OCI-LY7 (cell line): ENCODE measurements at regions of chr20 and their contacts with region 1.

Region 1: DNA sequence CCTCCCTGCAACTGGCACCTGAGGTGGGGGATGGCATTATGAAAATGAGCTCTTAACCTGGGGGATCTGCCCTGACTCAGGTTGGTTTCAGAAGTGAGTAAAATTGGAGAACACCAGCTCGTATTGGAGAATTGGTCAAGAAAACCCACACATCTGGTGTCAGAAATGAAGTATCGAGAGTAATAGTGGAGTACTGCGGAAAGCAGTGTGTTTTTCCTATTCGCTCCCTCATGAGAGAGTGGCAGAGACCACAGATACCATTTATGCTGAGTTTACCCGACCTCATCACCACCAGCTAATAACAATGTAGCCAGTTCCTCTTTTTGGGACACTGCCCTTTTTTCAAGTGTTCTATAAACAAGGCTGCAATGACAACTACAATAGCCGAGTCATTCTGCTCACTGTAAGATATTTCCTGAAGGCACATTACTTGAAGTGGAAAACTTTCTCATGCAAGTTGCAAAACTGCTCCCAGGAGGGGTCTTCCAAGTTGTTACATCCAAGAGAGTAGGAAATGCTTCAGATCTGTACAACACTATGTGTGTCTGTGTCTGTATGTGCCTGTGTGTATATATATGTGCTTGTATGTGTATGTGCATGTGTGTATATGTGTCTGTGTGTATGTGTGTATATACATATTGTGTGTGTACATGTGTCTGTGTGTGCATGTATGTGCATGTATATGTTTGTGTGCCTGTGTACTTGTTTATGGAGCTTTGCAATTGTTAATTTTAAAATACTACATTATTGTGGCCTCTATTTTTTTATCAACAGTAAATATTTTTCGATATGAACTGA is 106.0 kb upstream of the CST7 start:
- DNase-seq: peak; percentile 76
- H3K4me3 ChIP-seq: peak overlapping the region; percentile 44
- H3K27ac ChIP-seq: peak overlapping the region; percentile 55
- H3K4me1 ChIP-seq: peaks cover 19% of the 10 kb centered on the region
- CTCF ChIP-seq: no peak

Region 2: DNA sequence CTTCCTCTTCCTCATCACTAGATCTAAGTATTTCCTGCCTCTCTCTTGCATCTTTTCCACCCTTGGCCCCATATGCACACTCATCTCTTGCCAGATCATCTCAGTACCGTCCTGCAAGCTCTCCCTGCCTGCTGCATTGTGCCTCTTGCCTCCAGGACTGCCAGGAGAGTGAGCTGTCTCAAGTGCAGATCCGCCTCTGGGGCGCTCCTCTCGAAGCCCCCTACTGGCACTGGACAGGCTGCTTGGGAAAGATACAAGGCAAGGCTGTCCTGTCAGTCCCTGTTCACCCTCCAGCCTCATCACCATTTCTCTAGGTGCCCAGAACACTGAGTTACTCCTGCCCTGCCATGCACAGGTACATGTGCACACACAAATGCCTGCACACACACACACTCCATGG is 363.5 kb before region 1 on chr20:
- CTCF ChIA-PET with region 1: no interaction called
- POLR2A ChIA-PET with region 1: no interaction called
- intact Hi-C with region 1: no loop called
- DNase-seq: no peak
- H3K4me3 ChIP-seq: no peak overlapping the region
- H3K27ac ChIP-seq: no peak overlapping the region
- H3K4me1 ChIP-seq: no peaks in the 10 kb centered on the region
- CTCF ChIP-seq: no peak

Region 3: DNA sequence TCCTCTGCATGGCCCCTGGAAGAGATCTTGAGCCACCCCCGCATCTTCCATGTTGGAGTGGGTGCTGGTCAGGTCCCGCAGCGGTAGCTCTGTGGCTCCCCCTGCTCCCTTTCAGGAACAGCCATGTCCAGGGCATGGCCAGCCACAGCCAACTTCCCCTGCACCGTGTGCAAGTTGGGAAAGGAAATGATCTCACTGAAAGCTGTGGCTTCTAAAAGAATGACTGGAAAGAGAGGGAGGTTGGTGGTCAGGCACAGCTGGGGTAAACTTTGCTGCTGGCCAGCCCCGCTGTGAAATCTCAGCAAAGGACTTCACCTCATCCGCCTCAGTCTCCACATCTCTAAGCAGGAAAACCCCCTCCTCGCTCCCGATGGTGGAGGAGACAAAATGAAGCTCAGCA is 47.7 kb before region 1 on chr20:
- CTCF ChIA-PET with region 1: no interaction called
- POLR2A ChIA-PET with region 1: no interaction called
- intact Hi-C with region 1: no loop called
- DNase-seq: no peak
- H3K4me3 ChIP-seq: no peak overlapping the region
- H3K27ac ChIP-seq: no peak overlapping the region
- H3K4me1 ChIP-seq: no peaks in the 10 kb centered on the region
- CTCF ChIP-seq: no peak

Region 4: GRCh38 chr20:24872291-24873024 is 29.3 kb after region 1 on chr20:
- CTCF ChIA-PET with region 1: no interaction called
- POLR2A ChIA-PET with region 1: no interaction called
- intact Hi-C with region 1: loop called (anchors 1 kb)
- DNase-seq: peak; percentile 21
- H3K4me3 ChIP-seq: no peak overlapping the region
- H3K27ac ChIP-seq: no peak overlapping the region
- H3K4me1 ChIP-seq: no peaks in the 10 kb centered on the region
- CTCF ChIP-seq: no peak